GM13977 (cell line): ENCODE measurements at regions of chr3 and their contacts with region 1.

Region 1: GRCh38 chr3:196274585-196274984 is 12.9 kb downstream of the PCYT1A start:
- DNase-seq: peak; percentile 83
- CTCF ChIP-seq: no peak

Region 2: GRCh38 chr3:196159952-196160804 is 114.4 kb before region 1 on chr3:
- in situ Hi-C with region 1: no loop called
- DNase-seq: peak; percentile 85
- CTCF ChIP-seq: peak; percentile 4

Region 3: DNA sequence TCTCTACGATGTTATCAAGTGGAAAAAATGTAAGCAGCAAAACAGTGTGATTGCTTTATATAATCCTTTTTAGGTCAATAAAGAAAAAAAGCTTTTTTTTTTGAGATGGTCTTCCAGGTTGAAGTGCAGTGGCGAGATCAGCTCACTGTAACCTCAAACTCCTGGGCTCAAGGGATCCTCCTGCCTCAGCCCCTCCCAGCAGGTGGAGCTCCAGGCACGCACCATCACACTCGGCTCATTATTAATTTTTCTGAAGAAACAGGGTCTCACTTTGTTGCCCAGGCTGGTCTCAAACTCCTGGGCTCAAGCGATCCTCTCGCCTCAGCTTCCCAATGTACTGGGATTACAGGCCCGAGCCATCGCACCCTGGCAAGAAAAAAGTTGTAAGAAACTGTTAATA is 211.7 kb after region 1 on chr3:
- in situ Hi-C with region 1: loop called (anchors 25 kb)
- DNase-seq: no peak
- CTCF ChIP-seq: peak; percentile 51